ENCODE measurements at regions of chr18 and their contacts with region 1.

Region 1: GRCh38 chr18:63320046-63320689 is 599 bp upstream of the BCL2 start:
- DNase-seq: peak; percentile 66 to 71
- H3K4me3 ChIP-seq: peak overlapping the region; percentile 60
- H3K27ac ChIP-seq: 0 out of 2 replicates have a peak overlapping the region, but pooled peaks have one; percentile 43
- H3K4me1 ChIP-seq: peaks cover 18% of the 10 kb centered on the region; the same call in 1 of the 2 replicates
- H3K27me3 ChIP-seq: no peaks in the 10 kb centered on the region
- CTCF ChIP-seq: no peak

Region 2: GRCh38 chr18:63016270-63016669 is 303.9 kb before region 1 on chr18:
- CTCF ChIA-PET with region 1: interaction called, 4 read pairs
- POLR2A ChIA-PET with region 1: no interaction called
- intact Hi-C with region 1: loop called (anchors 1 kb)
- DNase-seq: peak; percentile 30 to 43
- H3K4me3 ChIP-seq: no peak overlapping the region
- H3K27ac ChIP-seq: no peak overlapping the region
- H3K4me1 ChIP-seq: no peaks in the 10 kb centered on the region
- H3K27me3 ChIP-seq: no peaks in the 10 kb centered on the region
- CTCF ChIP-seq: peak; percentile 91

Region 3: GRCh38 chr18:63119647-63120046 is 200.5 kb before region 1 on chr18:
- CTCF ChIA-PET with region 1: no interaction called
- POLR2A ChIA-PET with region 1: no interaction called
- intact Hi-C with region 1: loop called (anchors 1 kb)
- DNase-seq: peak in 1 of 2 experiments; percentile 6
- H3K4me3 ChIP-seq: no peak overlapping the region
- H3K27ac ChIP-seq: no peak overlapping the region
- H3K4me1 ChIP-seq: no peaks in the 10 kb centered on the region
- H3K27me3 ChIP-seq: no peaks in the 10 kb centered on the region
- CTCF ChIP-seq: no peak; the same call in 1 of the 2 replicates

Region 4: DNA sequence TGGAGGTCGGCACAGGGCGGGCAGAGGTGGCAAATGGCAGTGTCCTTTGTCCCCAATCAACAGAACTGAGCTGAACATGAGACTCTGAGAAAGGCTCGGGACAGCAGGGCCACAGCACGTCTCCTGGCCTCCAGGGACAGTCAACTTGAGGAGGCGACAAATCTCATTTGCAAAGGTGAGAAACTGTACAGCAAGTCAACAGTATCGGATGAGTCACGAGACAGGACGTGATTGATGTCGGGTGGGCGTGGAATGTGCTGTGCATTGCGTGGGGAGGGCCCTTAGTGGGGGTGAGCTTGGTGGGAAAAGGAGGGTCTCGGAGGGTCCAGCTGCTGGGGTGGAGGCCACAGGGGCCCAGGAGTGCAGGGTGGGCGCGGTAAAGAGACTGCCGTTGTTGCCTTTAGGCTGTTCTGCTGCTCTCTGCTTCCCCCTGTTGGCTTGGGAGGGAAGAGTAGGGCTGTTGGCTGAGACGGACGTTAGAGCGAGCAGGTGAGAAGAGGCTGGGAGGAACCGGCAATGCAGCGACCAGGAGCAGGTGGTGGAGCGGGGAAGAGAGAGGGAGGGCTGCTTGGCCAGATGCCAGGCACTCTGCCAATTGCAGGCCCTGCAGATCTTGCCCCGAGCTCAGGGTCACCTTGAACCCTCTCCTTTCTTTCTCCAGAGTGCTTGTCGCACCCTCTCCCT is 164.9 kb before region 1 on chr18:
- CTCF ChIA-PET with region 1: no interaction called
- POLR2A ChIA-PET with region 1: no interaction called
- intact Hi-C with region 1: loop called (anchors 1 kb)
- DNase-seq: peak; percentile 60 to 63
- H3K4me3 ChIP-seq: peak overlapping the region; percentile 46; the same call in 1 of the 2 replicates
- H3K27ac ChIP-seq: no peak overlapping the region
- H3K4me1 ChIP-seq: peaks cover 5% of the 10 kb centered on the region; the same call in 1 of the 2 replicates
- H3K27me3 ChIP-seq: no peaks in the 10 kb centered on the region
- CTCF ChIP-seq: peak; percentile 92

Region 5: GRCh38 chr18:63454497-63454896 is 134.3 kb after region 1 on chr18:
- CTCF ChIA-PET with region 1: no interaction called
- POLR2A ChIA-PET with region 1: no interaction called
- intact Hi-C with region 1: no loop called
- DNase-seq: peak; percentile 76 to 93
- H3K4me3 ChIP-seq: peak overlapping the region; percentile 15; the same call in 1 of the 2 replicates
- H3K27ac ChIP-seq: peak overlapping the region; percentile 86
- H3K4me1 ChIP-seq: peaks cover 52% of the 10 kb centered on the region
- H3K27me3 ChIP-seq: no peaks in the 10 kb centered on the region
- CTCF ChIP-seq: no peak

Region 6: DNA sequence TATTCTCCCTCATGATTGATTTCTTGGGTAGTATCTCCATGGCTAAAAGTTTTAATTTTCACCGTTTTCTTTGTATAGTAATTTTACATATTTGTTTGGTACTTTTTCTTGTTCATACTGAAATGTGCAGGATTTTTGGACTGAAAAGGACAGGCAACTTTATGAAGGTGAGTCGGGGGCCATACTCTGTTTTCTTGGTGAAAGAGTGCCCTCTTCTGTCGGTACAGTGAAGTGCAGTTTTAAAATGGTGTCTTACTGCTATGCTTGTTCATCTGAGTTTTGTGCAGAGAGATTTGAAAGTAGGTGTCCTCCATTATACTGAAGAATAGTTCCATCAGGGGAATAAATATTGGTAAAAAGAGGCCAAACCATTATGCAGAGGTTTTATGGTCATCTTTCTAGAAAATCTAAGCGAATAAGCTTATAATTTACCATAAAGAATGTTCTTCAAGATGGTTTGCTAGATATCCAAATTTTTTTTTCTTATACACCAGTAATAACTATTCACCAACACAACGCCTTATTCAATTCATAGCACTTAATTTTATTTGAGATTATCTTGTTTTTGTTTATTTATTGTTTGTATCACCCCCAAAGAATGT is 258.3 kb after region 1 on chr18:
- CTCF ChIA-PET with region 1: no interaction called
- POLR2A ChIA-PET with region 1: no interaction called
- intact Hi-C with region 1: loop called (anchors 10 kb)
- DNase-seq: peak in 1 of 2 experiments; percentile 20
- H3K4me3 ChIP-seq: no peak overlapping the region
- H3K27ac ChIP-seq: no peak overlapping the region
- H3K4me1 ChIP-seq: no peaks in the 10 kb centered on the region
- H3K27me3 ChIP-seq: no peaks in the 10 kb centered on the region
- CTCF ChIP-seq: peak; percentile 90

Region 7: DNA sequence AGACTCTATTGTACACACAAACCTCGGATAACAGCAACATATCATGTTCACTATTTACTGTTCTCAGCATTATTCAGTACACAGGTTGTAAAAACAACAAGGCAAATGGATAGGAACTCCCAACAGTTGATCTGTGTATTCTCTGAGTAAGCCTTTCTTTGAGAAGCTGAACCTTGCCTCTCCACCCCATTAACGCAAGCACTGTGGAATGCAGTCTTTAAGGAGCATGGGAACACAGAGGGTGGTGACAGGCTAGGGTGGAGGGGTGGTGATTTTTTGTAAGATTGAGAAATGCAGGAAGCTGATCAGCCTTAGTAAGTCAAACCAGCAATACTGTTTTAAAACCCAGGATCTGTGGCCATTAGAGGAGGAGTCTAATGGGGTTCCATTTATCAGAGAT is 363.0 kb after region 1 on chr18:
- CTCF ChIA-PET with region 1: no interaction called
- POLR2A ChIA-PET with region 1: no interaction called
- intact Hi-C with region 1: no loop called
- DNase-seq: peak; percentile 64 to 96
- H3K4me3 ChIP-seq: peak overlapping the region; percentile 38; the same call in 1 of the 2 replicates
- H3K27ac ChIP-seq: peak overlapping the region; percentile 98
- H3K4me1 ChIP-seq: peaks cover 29% of the 10 kb centered on the region
- H3K27me3 ChIP-seq: no peaks in the 10 kb centered on the region
- CTCF ChIP-seq: no peak

Region 8: DNA sequence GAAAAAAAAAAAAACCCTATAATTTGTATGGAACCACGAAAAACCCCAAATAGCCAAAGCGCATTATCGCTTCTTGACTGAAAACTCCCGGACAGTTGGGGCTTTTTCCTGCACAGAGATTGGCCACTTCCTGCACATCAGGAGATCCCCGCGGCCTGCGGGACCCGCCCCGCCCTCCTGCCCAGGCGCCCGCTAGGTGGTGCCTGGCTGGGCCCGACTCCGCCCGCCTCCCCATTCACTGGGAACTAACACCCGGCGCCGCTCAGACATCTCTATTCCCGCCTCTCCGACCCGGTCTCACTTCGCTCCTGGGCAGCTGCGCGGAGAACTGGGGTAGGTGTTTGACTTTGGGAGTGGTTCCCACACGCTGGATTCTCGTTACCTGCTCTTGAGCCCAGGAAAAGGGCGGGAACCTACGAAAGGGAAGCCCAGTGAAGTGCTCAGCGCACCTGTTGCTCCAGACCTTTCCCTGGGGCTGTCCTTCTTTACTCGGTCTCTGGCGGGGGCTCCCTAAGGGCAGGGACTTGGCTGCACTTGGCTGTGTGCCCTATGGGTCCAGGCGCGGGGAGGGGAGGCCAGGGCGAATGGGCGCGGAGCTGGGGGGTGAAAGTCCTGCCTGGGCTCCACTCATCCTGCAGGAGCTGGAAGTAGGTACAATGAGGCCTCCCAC is 629.0 kb after region 1 on chr18 and contains the start of gene HMSD:
- CTCF ChIA-PET with region 1: no interaction called
- POLR2A ChIA-PET with region 1: no interaction called
- intact Hi-C with region 1: no loop called
- DNase-seq: peak in 1 of 2 experiments; percentile 28
- H3K4me3 ChIP-seq: no peak within 1 kb of the TSS
- H3K27ac ChIP-seq: no peak within 1 kb of the TSS
- H3K4me1 ChIP-seq: no peaks in the 10 kb centered on the region
- H3K27me3 ChIP-seq: no peaks in the 10 kb centered on the region
- CTCF ChIP-seq: no peak
- total RNA-seq, gene HMSD: not detected in 2 replicates

Measured in PC-9 (cell line).